Heart right ventricle (tissue), 16 donors: ENCODE measurements at regions of chr6 and their contacts with region 1.

Region 1: GRCh38 chr6:23349521-23350147 is 776.4 kb upstream of the NRSN1 start:
- DNase-seq: no peak
- ATAC-seq: peak in 1 of 8 donors; percentile 39
- H3K4me3 ChIP-seq: no peak overlapping the region
- H3K27ac ChIP-seq: no peak overlapping the region
- H3K4me1 ChIP-seq: no peaks in the 10 kb centered on the region
- H3K27me3 ChIP-seq: no peaks in the 10 kb centered on the region
- CTCF ChIP-seq: no peak

Region 2: DNA sequence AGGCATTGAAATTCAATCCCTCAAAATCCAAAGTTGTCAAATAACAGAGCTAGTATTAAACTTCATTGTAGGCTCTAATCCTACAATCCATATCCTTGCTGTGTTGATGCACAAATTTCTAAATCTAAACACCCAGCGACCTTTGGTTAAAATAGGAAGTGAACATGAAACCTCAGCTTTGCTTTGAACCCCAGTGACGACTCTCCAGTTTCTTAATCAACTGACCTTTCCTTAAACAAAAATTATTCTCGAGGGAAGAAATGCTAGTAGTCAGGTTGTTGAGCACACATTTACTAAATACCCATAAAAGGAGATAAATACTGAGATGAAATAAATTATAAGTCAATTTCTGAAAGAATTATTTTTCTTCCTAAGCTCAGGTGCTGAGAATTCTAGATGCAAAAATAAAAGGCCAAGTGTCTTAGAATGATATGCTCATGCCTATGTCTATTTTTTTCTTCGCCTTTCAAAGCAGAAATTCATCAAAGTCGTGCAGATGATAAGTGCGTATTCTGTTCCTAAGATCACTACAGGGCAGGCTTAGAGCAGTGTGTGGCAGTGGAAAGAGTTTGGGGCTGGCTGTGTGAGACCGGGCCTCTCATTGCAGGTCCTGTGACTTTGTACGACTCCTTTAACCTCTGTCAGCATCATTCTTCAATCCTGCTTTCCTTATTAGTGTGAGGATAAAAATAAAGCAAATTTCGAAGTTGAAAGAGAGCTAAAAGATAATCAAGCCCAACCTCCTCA is 1261.5 kb before region 1 on chr6:
- intact Hi-C with region 1: no loop called
- DNase-seq: no peak
- ATAC-seq: no peak
- H3K4me3 ChIP-seq: no peak overlapping the region
- H3K27ac ChIP-seq: no peak overlapping the region
- H3K4me1 ChIP-seq: no peaks in the 10 kb centered on the region
- H3K27me3 ChIP-seq: no peaks in the 10 kb centered on the region
- CTCF ChIP-seq: no peak

Region 3: GRCh38 chr6:22940571-22941211 is 408.9 kb before region 1 on chr6:
- intact Hi-C with region 1: loop called in 1 of 10 experiments (anchors 10 kb)
- DNase-seq: no peak
- ATAC-seq: no peak
- H3K4me3 ChIP-seq: no peak overlapping the region
- H3K27ac ChIP-seq: no peak overlapping the region
- H3K4me1 ChIP-seq: peaks cover 0 to 8% (median 0%) of the 10 kb centered on the region in 9 donors
- H3K27me3 ChIP-seq: no peaks in the 10 kb centered on the region
- CTCF ChIP-seq: no peak